IMR-90 (cell line): ENCODE measurements at regions of chr6 and their contacts with region 1.

Region 1: GRCh38 chr6:42043787-42044475 is 6.4 kb upstream of the TAF8 start:
- DNase-seq: peak; percentile 79
- ATAC-seq: peak; percentile 76
- H3K4me3 ChIP-seq: no peak overlapping the region
- H3K27ac ChIP-seq: no peak overlapping the region
- H3K4me1 ChIP-seq: peaks cover 21% of the 10 kb centered on the region
- H3K27me3 ChIP-seq: no peaks in the 10 kb centered on the region; the same call in 1 of the 2 replicates
- CTCF ChIP-seq: peak; percentile 96
- POLR2A ChIP-seq: peak; percentile 66
- RAD21 ChIP-seq: peak; percentile 99

Region 2: DNA sequence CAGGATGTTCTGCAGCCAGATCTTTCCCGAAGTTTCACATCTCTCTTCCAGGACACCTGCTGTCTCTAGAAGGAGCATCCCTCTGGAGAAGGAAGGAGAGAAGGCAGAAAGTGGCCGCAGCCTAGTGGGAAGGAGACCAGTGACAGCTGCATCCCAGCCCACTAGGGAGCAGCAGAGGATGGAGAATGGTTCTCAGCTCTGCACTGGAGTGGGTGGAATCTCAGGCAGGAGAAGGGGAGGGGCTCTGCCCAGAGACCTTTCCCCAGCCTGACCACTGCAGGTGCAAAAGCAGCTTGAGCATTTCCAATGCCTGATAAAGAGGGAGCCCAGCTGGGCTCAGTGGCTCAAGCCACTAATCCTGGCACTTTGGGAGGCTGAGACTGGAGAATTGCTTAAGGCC is 676.2 kb before region 1 on chr6:
- CTCF ChIA-PET with region 1: no interaction called
- POLR2A ChIA-PET with region 1: no interaction called
- dilution Hi-C with region 1: no loop called
- in situ Hi-C with region 1: no loop called
- intact Hi-C with region 1: loop called (anchors 10 kb)
- DNase-seq: peak; percentile 48
- ATAC-seq: peak; percentile 82
- H3K4me3 ChIP-seq: no peak overlapping the region
- H3K27ac ChIP-seq: no peak overlapping the region
- H3K4me1 ChIP-seq: no peaks in the 10 kb centered on the region; the same call in 1 of the 2 replicates
- H3K27me3 ChIP-seq: peaks cover 29% of the 10 kb centered on the region
- CTCF ChIP-seq: peak; percentile 77
- POLR2A ChIP-seq: no peak
- RAD21 ChIP-seq: peak; percentile 79

Region 3: DNA sequence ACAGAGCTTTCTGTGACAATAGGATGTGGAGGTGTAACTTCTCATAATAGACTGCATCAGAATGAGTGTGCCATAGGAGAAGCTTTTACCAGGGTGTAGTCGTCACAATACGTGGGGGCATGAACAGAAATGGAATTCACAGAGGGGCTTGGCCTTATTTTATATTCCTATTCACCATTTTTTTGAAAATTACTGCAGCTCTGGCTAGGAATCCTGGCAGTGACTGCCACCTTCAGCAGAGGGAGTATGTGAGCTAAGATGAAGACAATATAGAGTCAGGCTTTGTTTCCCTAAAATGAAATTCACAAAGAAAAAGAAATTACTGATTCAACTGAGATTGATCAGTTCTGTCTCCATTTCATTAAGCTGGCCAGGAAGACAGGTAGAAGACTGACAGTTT is 242.6 kb before region 1 on chr6:
- CTCF ChIA-PET with region 1: interaction called, 5 read pairs
- POLR2A ChIA-PET with region 1: no interaction called
- dilution Hi-C with region 1: no loop called
- in situ Hi-C with region 1: no loop called
- intact Hi-C with region 1: loop called (anchors 1 kb)
- DNase-seq: peak; percentile 38
- ATAC-seq: peak; percentile 70
- H3K4me3 ChIP-seq: no peak overlapping the region
- H3K27ac ChIP-seq: no peak overlapping the region
- H3K4me1 ChIP-seq: no peaks in the 10 kb centered on the region; the same call in 1 of the 2 replicates
- H3K27me3 ChIP-seq: no peaks in the 10 kb centered on the region
- CTCF ChIP-seq: peak; percentile 68
- POLR2A ChIP-seq: no peak
- RAD21 ChIP-seq: peak; percentile 71

Region 4: DNA sequence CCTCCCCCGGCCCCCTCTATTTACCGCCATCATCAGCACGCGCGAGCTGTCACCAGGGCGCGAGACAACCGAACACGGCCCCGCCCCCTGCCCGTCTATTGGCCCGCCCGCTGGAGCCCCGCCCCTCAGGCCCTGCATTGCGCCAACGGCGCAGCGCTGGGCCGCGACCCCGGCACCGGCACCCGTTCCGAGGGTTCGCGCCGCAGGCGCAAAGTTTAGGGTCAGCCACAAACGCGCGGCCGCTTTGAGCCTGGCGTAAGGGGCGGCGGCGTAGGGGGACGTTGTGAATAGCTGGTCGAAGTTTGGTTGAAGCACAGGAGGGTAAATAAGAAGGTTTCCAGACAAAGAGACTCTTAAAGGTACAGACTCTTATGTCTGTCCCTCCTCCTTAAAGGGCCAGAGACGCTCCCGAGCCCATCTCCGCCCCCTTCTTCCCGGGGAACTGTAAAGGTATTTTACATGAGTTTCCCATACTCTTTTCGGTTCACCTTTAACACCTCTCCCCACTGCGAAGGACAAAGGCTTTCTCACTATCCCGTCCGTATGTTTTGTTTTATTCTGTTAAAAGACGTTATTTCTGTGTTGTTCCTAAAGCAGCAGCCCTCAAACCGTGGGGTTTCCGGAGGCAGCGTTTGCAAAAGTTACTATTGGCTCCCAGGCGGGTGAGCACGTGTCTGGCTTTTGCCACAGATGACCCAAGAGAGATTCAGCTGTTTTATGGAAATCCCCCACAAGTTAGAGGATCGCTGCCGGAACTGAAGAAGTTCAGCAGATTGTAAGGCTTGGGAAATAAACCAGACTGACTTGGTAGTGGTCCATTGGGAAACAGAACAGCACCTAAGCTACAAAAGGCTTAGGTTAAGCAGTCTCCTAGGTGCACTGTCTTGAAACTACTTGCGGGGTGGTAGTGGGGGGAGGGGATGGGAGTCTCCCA is 148.4 kb before region 1 on chr6 and contains the start of gene USP49:
- CTCF ChIA-PET with region 1: no interaction called
- POLR2A ChIA-PET with region 1: no interaction called
- dilution Hi-C with region 1: no loop called
- in situ Hi-C with region 1: no loop called
- intact Hi-C with region 1: loop called (anchors 1 kb)
- DNase-seq: peak; percentile 87
- ATAC-seq: peak; percentile 98
- H3K4me3 ChIP-seq: peak within 1 kb of the TSS; percentile 91
- H3K27ac ChIP-seq: peak within 1 kb of the TSS; percentile 86
- H3K4me1 ChIP-seq: peaks cover 2% of the 10 kb centered on the region; the same call in 1 of the 2 replicates
- H3K27me3 ChIP-seq: no peaks in the 10 kb centered on the region
- CTCF ChIP-seq: 0 out of 2 replicates have a peak, but pooled peaks have one; percentile 8
- POLR2A ChIP-seq: peak; percentile 72
- RAD21 ChIP-seq: no peak
- total RNA-seq, gene USP49: 1.4 TPM in 2 replicates

Region 5: DNA sequence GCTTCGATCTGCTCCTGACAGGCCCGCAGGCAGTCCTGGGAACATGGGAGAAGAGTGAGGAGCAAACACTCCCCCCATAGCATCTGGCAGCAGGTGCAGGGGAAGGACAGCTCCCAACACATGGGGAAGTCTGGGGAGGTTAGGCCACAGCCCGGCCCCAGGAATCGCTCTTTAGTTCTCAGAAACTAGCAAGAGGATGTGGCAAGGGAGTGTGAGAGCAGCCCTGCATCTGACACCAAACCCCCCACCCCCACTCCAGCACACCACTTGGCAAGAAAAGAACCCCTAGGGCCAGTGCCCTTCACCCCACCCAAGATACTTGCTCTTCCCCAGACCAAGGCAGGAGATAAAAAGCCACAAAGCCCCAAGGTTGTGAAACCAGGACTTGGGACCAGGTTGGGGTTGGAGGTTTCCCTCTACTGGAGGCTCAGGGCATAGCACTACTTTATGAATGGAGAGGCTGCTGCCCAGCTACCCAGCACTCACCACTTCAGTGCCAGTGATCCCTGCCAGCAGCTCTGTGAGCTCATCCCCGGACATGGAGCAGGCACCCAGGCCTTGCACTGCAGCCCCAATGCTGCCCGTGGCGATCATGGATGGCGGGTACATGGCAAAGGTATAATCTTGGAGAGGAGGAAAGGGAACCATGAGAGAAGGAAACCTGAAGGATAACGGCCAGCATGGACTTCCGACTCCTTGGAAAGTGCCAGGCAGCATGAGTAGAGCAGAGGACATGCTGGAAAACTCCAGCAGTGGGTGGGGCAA is 107.7 kb before region 1 on chr6:
- CTCF ChIA-PET with region 1: interaction called, 4 read pairs
- POLR2A ChIA-PET with region 1: no interaction called
- dilution Hi-C with region 1: no loop called
- in situ Hi-C with region 1: loop called (anchors 5 kb)
- intact Hi-C with region 1: loop called (anchors 1 kb)
- DNase-seq: peak; percentile 85
- ATAC-seq: peak; percentile 70
- H3K4me3 ChIP-seq: no peak overlapping the region
- H3K27ac ChIP-seq: peak overlapping the region; percentile 33; the same call in 1 of the 2 replicates
- H3K4me1 ChIP-seq: peaks cover 26% of the 10 kb centered on the region
- H3K27me3 ChIP-seq: no peaks in the 10 kb centered on the region
- CTCF ChIP-seq: peak; percentile 92
- POLR2A ChIP-seq: 0 out of 2 replicates have a peak, but pooled peaks have one; percentile 38
- RAD21 ChIP-seq: peak; percentile 79